ENCODE measurements at regions of chr6 and their contacts with region 1.

Region 1: DNA sequence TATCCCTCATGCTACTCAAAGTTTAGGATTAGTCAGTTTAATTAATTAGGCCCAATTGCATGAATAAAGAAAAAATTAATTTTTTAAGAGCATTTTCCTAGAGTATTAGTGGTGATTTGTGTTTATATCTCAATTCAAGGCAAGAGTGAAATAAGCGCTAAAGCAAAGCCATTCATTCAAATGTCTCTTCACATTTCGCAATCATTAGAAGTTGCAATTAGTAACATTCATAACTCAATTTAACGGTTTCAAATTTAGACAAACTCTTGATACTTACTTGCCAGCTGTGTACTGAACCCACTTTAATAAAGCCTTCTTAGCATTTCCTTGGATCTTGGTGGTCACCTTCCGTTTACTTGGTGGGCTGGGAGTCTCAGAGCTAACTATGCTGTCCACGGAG is 127.2 kb downstream of the SYNE1 start:
- DNase-seq: no peak
- ATAC-seq: no peak
- H3K4me3 ChIP-seq: no peak overlapping the region
- H3K27ac ChIP-seq: no peak overlapping the region
- H3K4me1 ChIP-seq: no peaks in the 10 kb centered on the region
- H3K27me3 ChIP-seq: no peaks in the 10 kb centered on the region
- CTCF ChIP-seq: no peak
- POLR2A ChIP-seq: no peak
- RAD21 ChIP-seq: no peak

Region 2: DNA sequence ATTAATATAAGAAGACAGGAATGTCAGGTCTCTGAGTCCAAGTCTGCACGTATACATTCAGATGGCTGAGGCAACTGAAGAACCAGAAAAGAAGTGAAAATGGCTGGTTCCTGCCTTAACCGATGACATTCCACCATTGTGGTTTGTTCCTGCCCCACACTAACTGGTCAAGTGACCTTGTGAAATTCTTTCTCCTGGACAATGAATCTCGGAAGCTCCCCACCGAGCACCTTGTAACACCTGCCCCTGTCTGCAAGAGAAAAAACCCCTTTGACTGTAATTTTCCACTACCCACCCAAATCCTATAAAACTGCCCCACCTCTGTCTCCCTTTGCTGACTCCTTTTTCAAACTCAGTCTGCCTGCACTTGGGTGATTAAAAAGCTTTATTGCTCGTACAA is 13.2 kb before region 1 on chr6:
- CTCF ChIA-PET with region 1: no interaction called
- POLR2A ChIA-PET with region 1: no interaction called
- RAD21 ChIA-PET with region 1: no interaction called
- intact Hi-C with region 1: no loop called
- DNase-seq: no peak
- ATAC-seq: no peak
- H3K4me3 ChIP-seq: no peak overlapping the region
- H3K27ac ChIP-seq: no peak overlapping the region
- H3K4me1 ChIP-seq: peaks cover 2 to 26% of the 10 kb centered on the region in 2 experiments; a peak in 3 of 4 replicates
- H3K27me3 ChIP-seq: no peaks in the 10 kb centered on the region
- CTCF ChIP-seq: no peak
- POLR2A ChIP-seq: no peak
- RAD21 ChIP-seq: no peak

Region 3: GRCh38 chr6:152532616-152533015 is 22.7 kb after region 1 on chr6:
- CTCF ChIA-PET with region 1: no interaction called
- POLR2A ChIA-PET with region 1: no interaction called
- RAD21 ChIA-PET with region 1: no interaction called
- intact Hi-C with region 1: loop called (anchors 1 kb)
- DNase-seq: no peak
- ATAC-seq: no peak
- H3K4me3 ChIP-seq: no peak overlapping the region
- H3K27ac ChIP-seq: no peak overlapping the region
- H3K4me1 ChIP-seq: no peaks in the 10 kb centered on the region
- H3K27me3 ChIP-seq: no peaks in the 10 kb centered on the region
- CTCF ChIP-seq: no peak
- POLR2A ChIP-seq: no peak
- RAD21 ChIP-seq: no peak